ENCODE measurements at regions of chr6 and their contacts with region 1.

Region 1: DNA sequence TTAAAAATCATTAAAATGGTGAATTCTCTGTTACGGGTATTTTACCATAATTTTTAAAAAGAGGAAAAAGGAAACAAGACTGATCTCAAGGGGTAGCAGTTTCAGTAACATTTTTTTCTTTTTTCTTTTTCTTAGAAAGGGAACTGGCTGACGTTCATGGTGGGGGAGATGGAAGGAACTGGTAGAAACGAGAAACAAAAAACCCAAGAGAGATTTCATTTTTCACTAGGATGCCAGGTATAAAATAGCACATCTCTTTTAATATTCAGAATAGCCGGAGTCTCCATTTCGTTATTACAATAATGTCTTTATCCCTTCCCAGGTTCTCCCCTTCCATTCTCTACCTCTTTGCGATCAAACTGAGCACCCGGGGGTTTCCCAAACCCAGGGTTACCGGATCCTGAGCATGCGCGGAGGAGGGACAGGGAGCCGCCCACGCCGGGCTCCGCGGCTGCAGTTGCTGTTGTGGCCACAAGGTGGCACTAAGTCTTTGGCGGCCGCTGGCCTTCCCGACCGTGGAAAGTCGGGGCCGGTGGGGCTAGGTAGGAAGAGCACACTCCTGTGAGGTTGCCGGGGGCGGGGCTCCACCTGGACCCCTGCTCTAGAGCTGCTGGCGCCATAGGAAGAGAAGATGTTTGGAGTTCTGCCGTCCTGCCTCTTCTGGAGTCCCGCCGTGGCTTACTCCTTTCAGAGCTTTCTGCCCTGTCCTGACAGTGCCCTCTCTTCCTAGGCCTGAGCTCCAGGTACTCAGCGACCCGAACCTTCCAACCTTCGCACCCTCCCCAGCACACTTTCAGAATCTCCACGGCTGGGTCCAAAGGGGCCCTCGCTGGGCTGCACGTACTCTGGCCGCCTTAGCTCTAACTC is 146.8 kb downstream of the SH3BGRL2 start:
- DNase-seq: peak; percentile 92
- H3K4me3 Mint-ChIP-seq: peak overlapping the region; percentile 62
- H3K27ac Mint-ChIP-seq: peak overlapping the region; percentile 31
- H3K4me1 Mint-ChIP-seq: peaks cover 10% of the 10 kb centered on the region
- H3K27me3 Mint-ChIP-seq: no peaks in the 10 kb centered on the region

Region 2: DNA sequence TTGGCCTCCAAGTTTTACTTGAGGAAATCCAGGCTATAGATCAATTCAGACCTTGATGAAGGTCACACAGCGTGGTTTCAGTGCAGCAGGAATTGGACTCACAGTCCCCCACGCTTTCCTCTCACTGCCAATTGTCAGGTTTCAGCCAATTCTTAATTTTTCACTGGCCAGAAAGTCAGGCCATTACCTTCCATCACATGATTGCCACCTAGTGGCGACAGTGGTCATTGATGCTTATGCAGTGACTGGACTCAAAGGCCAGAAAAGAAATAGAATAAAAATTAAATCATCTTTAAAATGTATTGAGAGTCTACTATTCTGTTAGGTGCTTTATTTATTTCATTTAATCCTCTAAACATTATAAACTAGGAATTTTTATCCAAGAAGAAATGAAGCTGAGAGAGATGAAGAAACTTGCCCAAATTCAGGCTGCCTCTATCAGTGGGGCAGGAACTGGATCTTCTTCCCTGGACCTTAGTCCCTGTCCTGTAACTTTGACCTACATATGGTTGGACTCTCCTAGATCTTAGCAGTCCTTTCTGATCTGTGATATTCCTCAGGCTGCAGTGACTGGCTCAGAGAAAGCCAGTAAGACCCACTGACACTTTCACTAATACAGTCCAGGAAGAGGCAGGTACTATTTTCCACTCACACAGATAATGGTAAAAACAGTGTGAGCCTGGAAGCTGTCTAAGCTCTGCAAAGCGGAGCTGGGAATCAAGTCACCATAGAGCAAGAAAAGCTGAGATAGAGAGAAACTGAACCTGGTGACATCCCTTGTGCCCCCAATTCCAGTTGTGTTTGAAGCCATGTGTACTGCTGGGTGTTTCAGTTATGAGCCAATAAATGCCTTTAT is 36.1 kb after region 1 on chr6:
- CTCF ChIA-PET with region 1: interaction called, 29 read pairs
- POLR2A ChIA-PET with region 1: no interaction called
- intact Hi-C with region 1: loop called (anchors 1 kb)
- DNase-seq: peak; percentile 75
- H3K4me3 Mint-ChIP-seq: no peak overlapping the region
- H3K27ac Mint-ChIP-seq: no peak overlapping the region
- H3K4me1 Mint-ChIP-seq: no peaks in the 10 kb centered on the region
- H3K27me3 Mint-ChIP-seq: no peaks in the 10 kb centered on the region

Region 3: DNA sequence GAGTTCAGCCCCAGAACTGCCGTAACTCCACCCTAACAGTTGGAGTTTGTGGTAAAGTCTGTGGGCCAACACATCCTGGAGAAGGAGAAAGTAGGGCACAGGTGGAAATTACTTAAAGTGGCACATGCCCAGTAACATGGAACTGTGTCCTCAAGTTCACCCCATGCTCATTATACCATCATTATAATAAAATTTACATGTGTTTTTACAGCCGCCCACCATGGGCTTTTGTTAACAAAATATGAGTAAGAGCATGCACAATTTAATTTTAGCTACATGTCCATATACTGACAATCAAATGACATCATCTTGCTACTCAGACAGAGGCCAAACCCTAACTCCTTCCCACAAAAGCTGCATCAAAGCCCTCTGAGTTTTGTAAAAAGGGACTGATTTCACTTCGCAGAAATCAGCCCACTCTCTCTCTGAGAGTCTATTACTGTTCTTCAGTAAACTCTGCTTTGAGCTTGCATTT is 186.7 kb after region 1 on chr6:
- CTCF ChIA-PET with region 1: no interaction called
- POLR2A ChIA-PET with region 1: no interaction called
- intact Hi-C with region 1: no loop called
- DNase-seq: no peak
- H3K4me3 Mint-ChIP-seq: no peak overlapping the region
- H3K27ac Mint-ChIP-seq: peak overlapping the region; percentile 28
- H3K4me1 Mint-ChIP-seq: no peaks in the 10 kb centered on the region
- H3K27me3 Mint-ChIP-seq: peaks cover 9% of the 10 kb centered on the region

Region 4: GRCh38 chr6:80004173-80005072 is 226.5 kb after region 1 on chr6 and contains the start of gene TTK:
- CTCF ChIA-PET with region 1: no interaction called
- POLR2A ChIA-PET with region 1: no interaction called
- intact Hi-C with region 1: loop called (anchors 5 kb)
- DNase-seq: peak; percentile 94
- H3K4me3 Mint-ChIP-seq: peak within 1 kb of the TSS; percentile 94
- H3K27ac Mint-ChIP-seq: peak within 1 kb of the TSS; percentile 86
- H3K4me1 Mint-ChIP-seq: peaks cover 28% of the 10 kb centered on the region
- H3K27me3 Mint-ChIP-seq: peaks cover 3% of the 10 kb centered on the region
- total RNA-seq, gene TTK: 37.2 to 39.4 TPM

Region 5: DNA sequence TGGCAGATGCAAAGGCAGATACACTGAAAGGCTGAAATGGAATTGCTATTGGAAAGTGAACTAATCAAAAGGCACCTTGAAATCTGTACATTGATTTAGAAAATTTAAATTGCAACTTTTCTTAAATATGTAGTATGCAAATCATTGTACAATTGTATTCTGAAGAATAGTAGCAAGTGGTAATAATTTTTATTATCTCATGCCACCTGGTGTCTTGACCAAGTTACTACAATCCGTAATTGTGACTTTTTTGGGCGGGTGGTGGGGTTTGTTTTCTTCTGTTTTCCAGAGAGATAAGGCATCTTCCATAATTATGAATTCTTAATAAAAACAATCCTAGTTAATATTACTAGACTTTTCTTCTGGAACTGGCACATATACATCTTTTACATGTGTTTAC is 316.1 kb after region 1 on chr6:
- CTCF ChIA-PET with region 1: no interaction called
- POLR2A ChIA-PET with region 1: no interaction called
- intact Hi-C with region 1: loop called (anchors 5 kb)
- DNase-seq: no peak
- H3K4me3 Mint-ChIP-seq: no peak overlapping the region
- H3K27ac Mint-ChIP-seq: no peak overlapping the region
- H3K4me1 Mint-ChIP-seq: no peaks in the 10 kb centered on the region
- H3K27me3 Mint-ChIP-seq: peaks cover 2% of the 10 kb centered on the region

Measured in activated CD4-positive, alpha-beta memory T cell treated with anti-CD3 and anti-CD28 coated beads for 36 hours (primary cell).